ENCODE measurements at regions of chr9 and their contacts with region 1.

Region 1: GRCh38 chr9:34072868-34073590 is 24.3 kb upstream of the UBAP2 start:
- DNase-seq: peak; percentile 84 to 88
- H3K4me3 ChIP-seq: no peak overlapping the region
- H3K4me3 Mint-ChIP-seq: peak overlapping the region; percentile 67
- H3K27ac Mint-ChIP-seq: peak overlapping the region; percentile 91
- H3K4me1 ChIP-seq: peaks cover 33% of the 10 kb centered on the region
- H3K4me1 Mint-ChIP-seq: peaks cover 34% of the 10 kb centered on the region
- H3K27me3 ChIP-seq: no peaks in the 10 kb centered on the region
- H3K27me3 Mint-ChIP-seq: no peaks in the 10 kb centered on the region
- CTCF ChIP-seq: no peak

Region 2: GRCh38 chr9:33924978-33925797 is 147.8 kb before region 1 on chr9:
- CTCF ChIA-PET with region 1: interaction called, 18 read pairs
- POLR2A ChIA-PET with region 1: no interaction called
- intact Hi-C with region 1: loop called (anchors 5 kb)
- DNase-seq: peak in 1 of 2 experiments; percentile 67
- H3K4me3 ChIP-seq: no peak overlapping the region
- H3K4me3 Mint-ChIP-seq: no peak overlapping the region
- H3K27ac Mint-ChIP-seq: peak overlapping the region; percentile 21
- H3K4me1 ChIP-seq: no peaks in the 10 kb centered on the region
- H3K4me1 Mint-ChIP-seq: no peaks in the 10 kb centered on the region
- H3K27me3 ChIP-seq: no peaks in the 10 kb centered on the region
- H3K27me3 Mint-ChIP-seq: no peaks in the 10 kb centered on the region
- CTCF ChIP-seq: peak; percentile 39 to 66

Region 3: DNA sequence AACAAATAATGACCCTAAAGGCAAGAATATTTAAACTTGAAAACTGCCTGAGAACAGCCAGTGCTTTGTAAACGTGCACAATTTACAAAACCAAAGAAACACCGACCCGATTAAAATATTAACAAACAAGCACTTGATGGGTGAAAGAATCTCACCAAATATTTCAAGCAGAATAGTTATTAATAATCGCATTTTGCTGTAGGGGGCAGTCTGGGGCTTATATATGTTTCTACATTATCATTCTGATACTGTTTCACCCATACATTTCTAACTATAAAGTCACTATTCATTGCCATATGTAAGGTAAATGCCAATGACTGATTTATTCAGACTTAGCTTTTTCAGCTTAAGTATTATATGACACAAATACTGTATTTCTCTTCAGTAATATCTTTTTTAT is 62.0 kb before region 1 on chr9:
- CTCF ChIA-PET with region 1: interaction called, 8 read pairs
- POLR2A ChIA-PET with region 1: no interaction called
- intact Hi-C with region 1: loop called (anchors 1 kb)
- DNase-seq: peak in 1 of 2 experiments; percentile 33
- H3K4me3 ChIP-seq: no peak overlapping the region
- H3K4me3 Mint-ChIP-seq: no peak overlapping the region
- H3K27ac Mint-ChIP-seq: no peak overlapping the region
- H3K4me1 ChIP-seq: peaks cover 6% of the 10 kb centered on the region; the same call in 1 of the 2 replicates
- H3K4me1 Mint-ChIP-seq: no peaks in the 10 kb centered on the region
- H3K27me3 ChIP-seq: no peaks in the 10 kb centered on the region
- H3K27me3 Mint-ChIP-seq: no peaks in the 10 kb centered on the region
- CTCF ChIP-seq: no peak

Region 4: DNA sequence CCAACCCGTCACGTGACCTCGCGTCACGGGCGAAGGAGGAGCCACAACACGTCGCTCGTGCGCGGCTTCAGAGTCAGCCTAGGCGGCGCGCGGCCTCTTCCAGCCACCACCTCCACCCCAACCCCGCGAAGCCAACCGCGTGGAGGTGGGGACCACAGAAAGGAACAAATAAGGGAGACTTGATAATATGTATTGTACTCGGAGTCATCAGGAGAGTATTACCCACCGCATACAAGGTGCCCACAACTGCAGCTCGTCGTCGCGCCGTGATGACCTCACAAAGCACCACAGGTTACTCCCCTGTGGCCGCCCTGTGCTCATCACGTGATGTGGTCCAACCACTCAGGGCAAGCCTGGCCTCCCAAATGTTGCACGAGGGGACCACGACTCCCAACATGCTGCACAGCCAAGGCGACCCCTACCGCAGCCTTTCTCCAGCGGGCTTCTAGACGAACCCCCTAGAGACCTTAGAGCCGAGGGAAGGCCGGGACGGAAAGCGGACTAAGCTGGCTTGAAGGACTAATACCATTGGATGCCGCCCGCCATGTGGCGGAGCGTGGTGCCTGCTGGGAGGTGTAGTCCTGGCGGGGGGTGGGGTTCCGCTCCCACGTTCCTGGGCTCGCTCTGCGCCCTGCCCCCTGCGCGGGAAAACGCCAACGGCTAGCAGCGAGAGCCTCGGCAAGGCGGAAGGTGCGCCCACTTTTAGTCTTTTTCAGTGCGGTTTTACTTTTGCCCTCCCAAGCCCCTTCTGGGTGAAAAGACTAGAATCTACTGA is 23.9 kb before region 1 on chr9:
- CTCF ChIA-PET with region 1: interaction called, 46 read pairs
- POLR2A ChIA-PET with region 1: interaction called, 68 read pairs
- intact Hi-C with region 1: loop called (anchors 1 kb)
- DNase-seq: peak; percentile 96 to 99
- H3K4me3 ChIP-seq: peak overlapping the region; percentile 99
- H3K4me3 Mint-ChIP-seq: peak overlapping the region; percentile 100
- H3K27ac Mint-ChIP-seq: peak overlapping the region; percentile 100
- H3K4me1 ChIP-seq: peaks cover 18% of the 10 kb centered on the region
- H3K4me1 Mint-ChIP-seq: peaks cover 17% of the 10 kb centered on the region
- H3K27me3 ChIP-seq: no peaks in the 10 kb centered on the region
- H3K27me3 Mint-ChIP-seq: no peaks in the 10 kb centered on the region
- CTCF ChIP-seq: no peak

Region 5: GRCh38 chr9:34114436-34114835 is 41.4 kb after region 1 on chr9:
- CTCF ChIA-PET with region 1: interaction called, 10 read pairs
- POLR2A ChIA-PET with region 1: no interaction called
- intact Hi-C with region 1: no loop called
- DNase-seq: no peak
- H3K4me3 ChIP-seq: no peak overlapping the region
- H3K4me3 Mint-ChIP-seq: no peak overlapping the region
- H3K27ac Mint-ChIP-seq: no peak overlapping the region
- H3K4me1 ChIP-seq: no peaks in the 10 kb centered on the region
- H3K4me1 Mint-ChIP-seq: no peaks in the 10 kb centered on the region
- H3K27me3 ChIP-seq: no peaks in the 10 kb centered on the region
- H3K27me3 Mint-ChIP-seq: no peaks in the 10 kb centered on the region
- CTCF ChIP-seq: no peak

Region 6: GRCh38 chr9:34252670-34253459 is 179.8 kb after region 1 on chr9:
- CTCF ChIA-PET with region 1: interaction called, 18 read pairs
- POLR2A ChIA-PET with region 1: no interaction called
- intact Hi-C with region 1: loop called (anchors 1 kb)
- DNase-seq: peak; percentile 70 to 80
- H3K4me3 ChIP-seq: no peak overlapping the region
- H3K4me3 Mint-ChIP-seq: no peak overlapping the region
- H3K27ac Mint-ChIP-seq: no peak overlapping the region
- H3K4me1 ChIP-seq: no peaks in the 10 kb centered on the region
- H3K4me1 Mint-ChIP-seq: no peaks in the 10 kb centered on the region
- H3K27me3 ChIP-seq: no peaks in the 10 kb centered on the region
- H3K27me3 Mint-ChIP-seq: no peaks in the 10 kb centered on the region
- CTCF ChIP-seq: peak; percentile 92 to 93

Region 7: DNA sequence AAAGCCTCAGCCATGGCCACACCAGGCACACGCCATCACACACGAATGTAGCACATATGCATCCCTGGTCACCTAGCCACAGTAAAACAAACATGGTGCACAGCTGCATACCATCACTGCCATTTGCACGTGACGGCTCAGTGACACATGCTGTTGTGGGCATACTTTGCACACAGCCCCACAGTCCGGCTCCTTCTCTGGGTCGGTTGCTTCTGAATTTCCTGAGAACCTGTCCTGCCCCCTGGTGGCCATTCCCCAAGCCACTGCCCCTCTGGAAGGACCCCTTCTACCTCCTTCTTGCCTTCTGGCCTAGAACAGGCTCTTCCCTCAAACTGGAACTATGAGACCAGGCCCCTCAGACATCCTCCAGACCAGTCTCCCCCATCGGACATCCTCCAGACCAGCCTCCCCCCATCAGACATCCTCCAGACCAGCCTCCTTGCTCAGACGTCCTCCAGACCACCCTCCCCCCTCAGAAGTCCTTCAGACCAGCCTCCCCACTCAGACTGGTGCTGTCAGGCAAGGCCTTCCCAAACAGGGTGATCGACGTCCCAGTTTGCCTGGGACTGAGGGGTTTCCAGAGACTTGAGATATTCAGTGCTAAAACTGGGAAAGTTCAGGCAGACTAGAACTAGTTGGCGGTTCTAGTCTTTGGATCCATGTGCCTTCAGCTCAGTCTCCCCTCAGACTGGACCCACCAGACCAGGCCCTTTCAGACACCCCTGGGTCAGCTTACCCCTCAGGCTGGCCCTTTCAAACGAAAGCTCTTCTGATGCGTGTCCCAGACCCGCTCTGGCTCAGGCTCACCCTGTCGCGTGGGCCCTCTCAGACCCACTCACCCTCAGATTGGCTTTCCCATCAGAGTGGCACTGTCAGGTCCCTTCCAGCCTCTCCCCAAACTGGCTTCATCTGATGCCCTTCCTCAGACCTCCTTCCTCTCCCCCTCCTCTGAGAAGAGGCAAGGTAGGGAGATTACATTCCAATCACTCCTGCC is 474.1 kb after region 1 on chr9:
- CTCF ChIA-PET with region 1: no interaction called
- POLR2A ChIA-PET with region 1: no interaction called
- intact Hi-C with region 1: no loop called
- DNase-seq: peak; percentile 61 to 67
- H3K4me3 ChIP-seq: no peak overlapping the region
- H3K4me3 Mint-ChIP-seq: no peak overlapping the region
- H3K27ac Mint-ChIP-seq: no peak overlapping the region
- H3K4me1 ChIP-seq: no peaks in the 10 kb centered on the region
- H3K4me1 Mint-ChIP-seq: no peaks in the 10 kb centered on the region
- H3K27me3 ChIP-seq: no peaks in the 10 kb centered on the region
- H3K27me3 Mint-ChIP-seq: peaks cover 13% of the 10 kb centered on the region
- CTCF ChIP-seq: peak; percentile 58 to 60